IMR-90 (cell line): ENCODE measurements at regions of chr5 and their contacts with region 1.

Region 1: DNA sequence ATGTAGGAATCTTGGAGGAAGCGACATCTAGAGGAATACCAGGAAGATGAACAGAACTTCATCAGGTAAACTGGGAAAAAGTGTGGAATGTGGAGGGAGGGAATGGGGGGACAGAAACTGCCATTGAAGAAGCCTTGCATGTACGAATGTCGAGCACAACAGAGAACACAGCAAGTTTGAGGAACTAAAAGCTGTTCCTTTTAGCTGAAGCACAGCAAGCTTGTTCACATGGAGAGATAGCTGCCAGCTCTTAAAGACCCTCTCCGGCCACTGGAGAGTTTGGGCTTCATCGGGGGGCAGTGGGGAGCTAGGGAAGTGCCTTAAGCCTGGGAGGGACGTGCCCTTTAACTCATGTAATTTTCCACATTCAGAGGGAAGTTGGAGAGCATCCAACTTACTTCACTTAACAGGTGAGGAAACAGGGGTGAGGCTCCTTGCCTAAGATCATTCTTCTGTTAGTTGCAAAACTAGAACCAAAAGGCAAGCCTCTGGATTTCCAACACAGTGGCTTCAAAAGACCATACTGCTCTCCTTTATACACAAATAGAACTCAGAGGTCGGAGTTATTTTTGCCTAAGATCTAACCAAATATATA is 2.3 kb upstream of the CYFIP2 start:
- DNase-seq: no peak
- ATAC-seq: no peak
- H3K4me3 ChIP-seq: no peak overlapping the region
- H3K27ac ChIP-seq: no peak overlapping the region
- H3K4me1 ChIP-seq: no peaks in the 10 kb centered on the region
- H3K27me3 ChIP-seq: peaks cover 30% of the 10 kb centered on the region
- CTCF ChIP-seq: no peak
- POLR2A ChIP-seq: no peak
- RAD21 ChIP-seq: no peak

Region 2: GRCh38 chr5:156513123-156513815 is 750.3 kb before region 1 on chr5:
- CTCF ChIA-PET with region 1: no interaction called
- POLR2A ChIA-PET with region 1: no interaction called
- dilution Hi-C with region 1: no loop called
- in situ Hi-C with region 1: no loop called
- intact Hi-C with region 1: no loop called
- DNase-seq: no peak
- ATAC-seq: no peak
- H3K4me3 ChIP-seq: no peak overlapping the region
- H3K27ac ChIP-seq: peak overlapping the region; percentile 45; the same call in 1 of the 2 replicates
- H3K4me1 ChIP-seq: peaks cover 15% of the 10 kb centered on the region
- H3K27me3 ChIP-seq: no peaks in the 10 kb centered on the region
- CTCF ChIP-seq: no peak
- POLR2A ChIP-seq: no peak
- RAD21 ChIP-seq: no peak

Region 3: DNA sequence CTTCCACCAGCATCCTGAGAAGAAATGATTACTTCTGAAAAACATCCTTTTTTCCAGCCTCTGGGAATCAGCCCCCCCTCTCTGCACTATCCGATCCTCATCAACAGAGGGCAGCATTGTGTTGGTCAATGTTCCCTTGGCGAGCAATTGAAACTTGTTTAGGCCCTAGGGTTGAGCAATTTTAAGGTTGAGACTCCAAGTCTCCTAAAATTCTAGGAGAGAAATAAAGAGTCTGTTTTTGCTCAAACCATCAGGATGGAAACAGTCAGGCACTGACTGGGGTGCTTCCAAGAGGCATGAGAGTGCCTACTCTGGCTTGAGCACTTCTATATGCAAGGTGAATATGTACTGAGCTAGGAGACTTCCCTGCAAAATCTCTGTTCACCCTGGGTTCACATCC is 10.0 kb before region 1 on chr5:
- CTCF ChIA-PET with region 1: interaction called, 12 read pairs
- POLR2A ChIA-PET with region 1: no interaction called
- dilution Hi-C with region 1: no loop called
- in situ Hi-C with region 1: no loop called
- intact Hi-C with region 1: no loop called
- DNase-seq: peak; percentile 47
- ATAC-seq: peak; percentile 96
- H3K4me3 ChIP-seq: no peak overlapping the region
- H3K27ac ChIP-seq: no peak overlapping the region
- H3K4me1 ChIP-seq: no peaks in the 10 kb centered on the region; the same call in 1 of the 2 replicates
- H3K27me3 ChIP-seq: peaks cover 11% of the 10 kb centered on the region
- CTCF ChIP-seq: peak; percentile 93
- POLR2A ChIP-seq: no peak
- RAD21 ChIP-seq: peak; percentile 88

Region 4: GRCh38 chr5:157303667-157304327 is 40.2 kb after region 1 on chr5:
- CTCF ChIA-PET with region 1: no interaction called
- POLR2A ChIA-PET with region 1: no interaction called
- dilution Hi-C with region 1: no loop called
- in situ Hi-C with region 1: no loop called
- intact Hi-C with region 1: no loop called
- DNase-seq: no peak
- ATAC-seq: no peak
- H3K4me3 ChIP-seq: no peak overlapping the region
- H3K27ac ChIP-seq: no peak overlapping the region
- H3K4me1 ChIP-seq: no peaks in the 10 kb centered on the region
- H3K27me3 ChIP-seq: no peaks in the 10 kb centered on the region; the same call in 1 of the 2 replicates
- CTCF ChIP-seq: peak; percentile 8; the same call in 1 of the 2 replicates
- POLR2A ChIP-seq: no peak
- RAD21 ChIP-seq: no peak